Activated CD4-positive, alpha-beta T cell treated with anti-CD3 and anti-CD28 coated beads, Interleukin-2, amount 10 ng/mL, durations not matched to agents 24 days and 14 days (primary cell): ENCODE measurements at regions of chr6 and their contacts with region 1.

Region 1: GRCh38 chr6:33299237-33299944 is 649 bp upstream of the RGL2 start:
- DNase-seq: peak; percentile 98
- H3K4me3 Mint-ChIP-seq: peak overlapping the region; percentile 94
- H3K27ac Mint-ChIP-seq: peak overlapping the region; percentile 99
- H3K4me1 Mint-ChIP-seq: peaks cover 28% of the 10 kb centered on the region
- H3K27me3 Mint-ChIP-seq: peaks cover 2% of the 10 kb centered on the region

Region 2: DNA sequence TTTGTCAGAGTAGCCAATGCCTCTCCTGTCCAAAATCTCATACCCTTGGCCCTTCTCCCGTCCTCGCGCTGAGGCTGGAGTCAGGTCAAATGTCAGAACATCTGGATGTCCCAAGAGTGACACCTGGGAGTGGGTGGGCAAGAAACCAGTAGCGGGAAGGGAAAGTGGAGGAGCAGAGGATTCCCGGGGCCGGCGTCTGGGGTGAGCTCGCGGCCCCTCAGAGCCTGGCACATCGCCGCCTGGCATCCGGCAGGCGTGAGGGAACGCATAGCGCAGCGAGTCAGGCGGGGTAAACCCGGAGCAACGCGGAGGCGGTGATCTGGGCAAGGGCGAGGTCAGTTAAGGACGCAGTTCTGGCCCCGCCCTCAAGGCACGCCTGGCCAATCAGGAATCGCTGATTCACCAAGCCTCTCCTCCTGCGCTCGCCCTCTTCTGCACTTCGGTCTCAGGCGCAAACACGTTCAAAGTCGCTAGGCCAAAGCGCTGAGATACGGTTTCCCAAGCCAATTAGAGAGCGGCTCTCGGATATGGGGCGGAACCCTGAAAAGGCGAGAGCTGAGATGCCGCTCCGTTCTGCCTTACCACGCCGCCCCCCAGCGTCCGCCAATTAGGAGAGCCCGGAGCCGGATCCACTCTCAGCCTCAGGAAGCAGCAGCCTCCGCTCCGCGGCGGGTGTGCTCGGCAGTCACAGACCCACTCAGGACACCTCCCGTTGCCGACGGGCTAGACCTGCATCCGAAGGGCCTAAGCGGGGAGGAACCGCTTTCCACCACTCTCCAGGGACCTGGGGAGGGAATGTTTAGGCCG is 50.3 kb before region 1 on chr6:
- intact Hi-C with region 1: loop called (anchors 1 kb)
- DNase-seq: peak; percentile 98
- H3K4me3 Mint-ChIP-seq: peak overlapping the region; percentile 91
- H3K27ac Mint-ChIP-seq: peak overlapping the region; percentile 94
- H3K4me1 Mint-ChIP-seq: peaks cover 34% of the 10 kb centered on the region
- H3K27me3 Mint-ChIP-seq: peaks cover 4% of the 10 kb centered on the region

Region 3: GRCh38 chr6:33276864-33277662 is 22.3 kb before region 1 on chr6 and contains the start of gene B3GALT4:
- intact Hi-C with region 1: loop called (anchors 1 kb)
- DNase-seq: peak; percentile 94
- H3K4me3 Mint-ChIP-seq: peak within 1 kb of the TSS; percentile 94
- H3K27ac Mint-ChIP-seq: peak within 1 kb of the TSS; percentile 91
- H3K4me1 Mint-ChIP-seq: peaks cover 56% of the 10 kb centered on the region
- H3K27me3 Mint-ChIP-seq: no peaks in the 10 kb centered on the region
- total RNA-seq, gene B3GALT4: 4.1 and 4.6 TPM in 2 replicates

Region 4: DNA sequence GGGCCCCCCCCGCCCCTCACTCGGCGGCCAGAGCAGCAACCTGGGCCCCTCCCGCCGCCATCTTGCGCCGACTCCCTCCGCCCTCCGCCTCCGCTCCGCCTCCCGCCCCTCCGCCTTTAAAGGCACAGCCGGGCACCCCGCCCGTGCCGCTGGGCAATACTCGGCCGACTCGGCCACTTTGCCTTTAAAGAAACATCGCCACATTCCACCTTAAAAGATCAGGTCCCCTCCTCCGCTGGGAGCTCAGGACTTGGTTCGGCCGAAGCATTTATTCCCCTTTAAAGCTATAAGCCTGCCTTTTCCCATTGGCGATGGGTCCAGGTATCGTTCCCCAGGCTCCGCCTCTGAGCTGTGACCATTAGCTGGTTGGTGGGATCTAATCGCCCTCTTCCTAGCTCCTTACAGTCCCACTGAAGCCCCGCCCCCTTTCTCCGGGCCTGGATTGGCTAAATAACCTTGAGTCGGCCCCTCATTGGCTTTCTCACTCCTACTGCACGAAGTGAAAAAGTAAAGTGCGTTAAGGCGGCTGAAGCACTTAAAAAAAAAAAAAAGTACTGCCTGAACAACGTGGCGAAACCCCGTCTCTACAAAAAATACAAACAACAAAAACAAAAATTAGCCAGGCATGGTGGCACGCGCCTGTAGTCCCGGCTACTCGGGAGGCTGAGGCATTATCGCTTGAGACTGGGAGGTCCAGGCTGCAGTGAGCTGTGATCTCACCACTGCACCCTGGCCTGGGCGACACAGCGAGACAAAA is 18.5 kb after region 1 on chr6 and contains the start of gene ZBTB22:
- intact Hi-C with region 1: loop called (anchors 1 kb)
- DNase-seq: peak; percentile 98
- H3K4me3 Mint-ChIP-seq: peak within 1 kb of the TSS; percentile 96
- H3K27ac Mint-ChIP-seq: peak within 1 kb of the TSS; percentile 96
- H3K4me1 Mint-ChIP-seq: peaks cover 53% of the 10 kb centered on the region
- H3K27me3 Mint-ChIP-seq: no peaks in the 10 kb centered on the region
- total RNA-seq, gene ZBTB22: 11.3 and 14.3 TPM in 2 replicates

Region 5: GRCh38 chr6:33344701-33345697 is 45.6 kb after region 1 on chr6:
- intact Hi-C with region 1: loop called (anchors 1 kb)
- DNase-seq: peak; percentile 90
- H3K4me3 Mint-ChIP-seq: peak overlapping the region; percentile 77
- H3K27ac Mint-ChIP-seq: peak overlapping the region; percentile 85
- H3K4me1 Mint-ChIP-seq: peaks cover 29% of the 10 kb centered on the region
- H3K27me3 Mint-ChIP-seq: peaks cover 7% of the 10 kb centered on the region

Region 6: DNA sequence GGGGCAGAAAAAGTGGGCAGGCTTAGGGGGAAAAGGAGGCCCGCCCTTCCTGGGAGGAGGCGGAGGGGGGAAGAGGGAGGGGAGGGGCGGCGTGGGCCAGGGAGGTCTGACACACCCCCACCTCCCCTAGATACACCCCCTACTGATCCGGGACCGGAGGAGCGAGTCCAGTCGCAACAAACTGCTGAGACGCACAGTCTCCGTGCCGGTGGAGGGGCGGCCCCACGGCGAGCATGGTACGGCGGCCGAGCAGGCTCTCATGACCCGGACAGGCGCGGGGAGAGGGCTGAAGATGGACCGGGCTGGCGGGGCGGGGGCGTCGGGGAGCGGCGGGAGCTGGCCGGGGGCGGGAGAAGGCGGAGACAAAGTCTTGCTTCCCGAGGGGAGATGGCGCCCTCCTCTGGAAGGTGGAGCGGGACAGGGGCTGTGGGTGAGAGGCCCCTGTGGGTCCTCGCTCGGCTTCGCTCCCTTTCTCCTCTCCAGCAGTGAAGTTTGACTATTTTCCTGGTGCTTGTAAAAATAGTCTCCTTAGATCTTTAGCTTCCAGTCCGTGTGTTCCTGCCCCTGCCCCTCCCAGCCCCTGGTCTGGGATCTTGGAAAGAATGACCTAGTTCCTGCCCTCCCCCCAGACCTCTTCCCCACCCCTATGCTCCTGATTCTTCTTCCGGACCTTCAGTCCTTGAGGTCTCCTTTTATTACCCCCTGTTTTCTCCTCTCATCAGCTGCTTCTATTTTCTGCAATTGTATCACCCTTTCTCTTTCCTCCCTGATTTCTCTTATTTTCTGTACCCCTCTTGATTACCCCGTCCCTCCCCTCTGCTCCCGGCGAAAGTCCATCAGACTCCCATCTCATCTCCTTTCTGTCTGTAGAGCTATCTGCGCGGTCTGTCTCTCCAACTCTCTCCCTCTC is 126.5 kb after region 1 on chr6:
- intact Hi-C with region 1: loop called (anchors 5 kb)
- DNase-seq: peak; percentile 93
- H3K4me3 Mint-ChIP-seq: peak overlapping the region; percentile 92
- H3K27ac Mint-ChIP-seq: peak overlapping the region; percentile 98
- H3K4me1 Mint-ChIP-seq: peaks cover 78% of the 10 kb centered on the region
- H3K27me3 Mint-ChIP-seq: no peaks in the 10 kb centered on the region